ENCODE measurements at regions of chr3 and their contacts with region 1.

Region 1: DNA sequence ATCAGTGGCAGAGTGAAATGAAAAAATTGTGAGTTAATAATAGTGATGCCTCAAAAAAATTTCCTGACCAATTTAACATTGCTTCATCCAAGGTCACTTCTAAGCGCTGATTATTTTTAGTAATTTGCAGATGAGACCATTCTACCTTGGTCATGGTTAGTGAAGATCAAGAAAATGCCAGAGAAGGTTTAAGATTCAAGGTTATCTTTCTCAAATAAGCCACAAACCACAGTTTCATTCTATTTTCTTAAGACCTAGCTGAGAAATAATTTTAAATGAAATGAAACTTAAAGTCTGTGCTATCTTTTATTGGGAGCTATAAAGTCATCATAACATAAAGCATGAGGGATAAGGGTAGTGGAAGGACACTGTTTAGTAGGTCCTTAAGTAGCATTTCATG is 353.9 kb upstream of the NAALADL2 start:
- DNase-seq: no peak
- ATAC-seq: no peak
- H3K4me3 ChIP-seq: no peak overlapping the region
- H3K27ac ChIP-seq: no peak overlapping the region
- H3K4me1 ChIP-seq: no peaks in the 10 kb centered on the region
- H3K27me3 ChIP-seq: no peaks in the 10 kb centered on the region
- CTCF ChIP-seq: no peak

Region 2: DNA sequence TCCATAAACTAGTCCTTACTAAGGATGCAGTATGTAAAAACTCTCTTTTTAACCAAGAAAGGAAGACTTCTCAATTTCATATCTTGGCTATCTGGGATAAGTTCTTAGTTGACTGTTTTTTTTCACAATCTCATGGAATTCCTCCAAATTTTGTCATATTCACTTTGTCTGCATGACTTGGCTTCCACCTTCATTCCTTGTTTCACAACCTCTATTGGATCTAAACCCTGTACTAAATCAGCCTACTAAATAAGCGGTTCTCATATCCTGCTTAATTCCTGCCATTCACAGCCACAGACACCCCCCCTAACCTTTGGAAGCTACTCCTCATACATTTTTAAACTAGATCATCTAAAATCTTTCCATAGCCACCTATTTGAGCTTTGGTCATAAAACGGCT is 16.7 kb before region 1 on chr3:
- CTCF ChIA-PET with region 1: interaction called, 10 read pairs
- POLR2A ChIA-PET with region 1: no interaction called
- in situ Hi-C with region 1: no loop called
- intact Hi-C with region 1: no loop called
- DNase-seq: no peak
- ATAC-seq: no peak
- H3K4me3 ChIP-seq: no peak overlapping the region
- H3K27ac ChIP-seq: no peak overlapping the region
- H3K4me1 ChIP-seq: no peaks in the 10 kb centered on the region
- H3K27me3 ChIP-seq: no peaks in the 10 kb centered on the region
- CTCF ChIP-seq: no peak